ENCODE measurements at regions of chr21 and their contacts with region 1.

Region 1: GRCh38 chr21:14675774-14676530 is 129.8 kb upstream of the SAMSN1 start:
- DNase-seq: no peak
- ATAC-seq: peak; percentile 79
- H3K4me3 Mint-ChIP-seq: peak overlapping the region; percentile 46
- H3K27ac Mint-ChIP-seq: peak overlapping the region; percentile 90
- H3K4me1 Mint-ChIP-seq: peaks cover 60% of the 10 kb centered on the region
- H3K27me3 Mint-ChIP-seq: no peaks in the 10 kb centered on the region
- CTCF ChIP-seq: no peak

Region 2: DNA sequence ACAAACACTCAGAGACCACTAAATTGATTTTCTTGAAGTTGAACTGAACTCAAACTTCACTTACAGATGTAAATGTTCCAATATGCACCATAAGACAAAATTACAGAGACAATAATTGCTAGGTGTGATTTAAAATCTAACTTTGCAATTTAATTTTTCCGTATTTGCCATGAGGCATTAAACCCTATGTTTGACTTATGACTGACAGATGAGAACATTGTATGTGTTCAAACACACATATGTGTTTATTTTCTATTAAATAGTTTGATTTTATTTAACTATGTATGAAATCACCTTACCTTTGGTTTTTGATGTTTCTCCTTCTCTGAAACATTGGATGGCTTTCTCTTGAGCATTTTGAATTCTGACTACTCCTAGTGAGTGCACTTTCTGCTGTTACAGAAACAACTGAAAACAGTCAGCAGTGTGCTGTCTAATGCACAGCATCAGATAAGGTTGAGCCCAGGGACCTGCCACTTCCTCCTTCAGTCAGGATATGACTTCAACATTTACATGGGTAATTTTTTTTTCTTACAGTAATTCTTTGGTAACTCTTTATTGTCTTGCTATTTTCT is 130.0 kb before region 1 on chr21 and contains the start of gene SAMSN1:
- CTCF ChIA-PET with region 1: no interaction called
- POLR2A ChIA-PET with region 1: interaction called, 3 read pairs
- intact Hi-C with region 1: loop called (anchors 5 kb)
- DNase-seq: no peak
- ATAC-seq: peak; percentile 93
- H3K4me3 Mint-ChIP-seq: peak within 1 kb of the TSS; percentile 88
- H3K27ac Mint-ChIP-seq: peak within 1 kb of the TSS; percentile 87
- H3K4me1 Mint-ChIP-seq: peaks cover 64% of the 10 kb centered on the region
- H3K27me3 Mint-ChIP-seq: no peaks in the 10 kb centered on the region
- CTCF ChIP-seq: no peak
- total RNA-seq, gene SAMSN1: 48.7 and 49.7 TPM in 2 replicates

Region 3: GRCh38 chr21:14557413-14557812 is 118.5 kb before region 1 on chr21:
- CTCF ChIA-PET with region 1: no interaction called
- POLR2A ChIA-PET with region 1: no interaction called
- intact Hi-C with region 1: no loop called
- DNase-seq: no peak
- ATAC-seq: peak; percentile 41
- H3K4me3 Mint-ChIP-seq: peak overlapping the region; percentile 44
- H3K27ac Mint-ChIP-seq: peak overlapping the region; percentile 89
- H3K4me1 Mint-ChIP-seq: peaks cover 64% of the 10 kb centered on the region
- H3K27me3 Mint-ChIP-seq: no peaks in the 10 kb centered on the region
- CTCF ChIP-seq: no peak

Region 4: DNA sequence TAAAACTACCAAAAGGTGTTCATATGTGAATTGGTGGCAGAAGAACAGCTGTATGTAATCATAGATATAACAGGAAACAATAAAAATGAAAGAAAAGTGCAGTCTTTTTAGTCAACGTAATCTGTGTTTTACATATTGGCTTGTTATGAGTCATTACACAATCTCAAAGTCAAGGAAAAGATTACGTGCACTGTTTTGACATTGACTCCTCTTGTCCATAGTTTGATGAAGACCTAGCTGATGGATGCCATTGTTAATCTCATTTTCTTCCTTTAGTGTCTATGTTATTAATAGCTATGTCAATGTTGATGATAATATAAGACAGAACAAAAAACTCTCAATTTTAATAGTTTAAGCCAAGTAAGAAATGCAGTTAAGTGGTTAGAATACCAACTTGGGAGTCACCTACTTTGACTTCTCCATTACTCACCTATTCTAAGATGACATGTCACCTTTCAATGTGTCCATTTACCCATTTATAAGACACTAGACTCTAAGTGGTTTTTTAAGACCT is 45.3 kb before region 1 on chr21:
- CTCF ChIA-PET with region 1: no interaction called
- POLR2A ChIA-PET with region 1: interaction called, 3 read pairs
- intact Hi-C with region 1: loop called (anchors 5 kb)
- DNase-seq: no peak
- ATAC-seq: peak; percentile 75
- H3K4me3 Mint-ChIP-seq: no peak overlapping the region
- H3K27ac Mint-ChIP-seq: peak overlapping the region; percentile 24
- H3K4me1 Mint-ChIP-seq: peaks cover 16% of the 10 kb centered on the region
- H3K27me3 Mint-ChIP-seq: no peaks in the 10 kb centered on the region
- CTCF ChIP-seq: no peak

Region 5: GRCh38 chr21:14712121-14712723 is 36.3 kb after region 1 on chr21:
- CTCF ChIA-PET with region 1: no interaction called
- POLR2A ChIA-PET with region 1: no interaction called
- intact Hi-C with region 1: no loop called
- DNase-seq: no peak
- ATAC-seq: no peak
- H3K4me3 Mint-ChIP-seq: no peak overlapping the region
- H3K27ac Mint-ChIP-seq: no peak overlapping the region
- H3K4me1 Mint-ChIP-seq: no peaks in the 10 kb centered on the region
- H3K27me3 Mint-ChIP-seq: no peaks in the 10 kb centered on the region
- CTCF ChIP-seq: no peak

Region 6: DNA sequence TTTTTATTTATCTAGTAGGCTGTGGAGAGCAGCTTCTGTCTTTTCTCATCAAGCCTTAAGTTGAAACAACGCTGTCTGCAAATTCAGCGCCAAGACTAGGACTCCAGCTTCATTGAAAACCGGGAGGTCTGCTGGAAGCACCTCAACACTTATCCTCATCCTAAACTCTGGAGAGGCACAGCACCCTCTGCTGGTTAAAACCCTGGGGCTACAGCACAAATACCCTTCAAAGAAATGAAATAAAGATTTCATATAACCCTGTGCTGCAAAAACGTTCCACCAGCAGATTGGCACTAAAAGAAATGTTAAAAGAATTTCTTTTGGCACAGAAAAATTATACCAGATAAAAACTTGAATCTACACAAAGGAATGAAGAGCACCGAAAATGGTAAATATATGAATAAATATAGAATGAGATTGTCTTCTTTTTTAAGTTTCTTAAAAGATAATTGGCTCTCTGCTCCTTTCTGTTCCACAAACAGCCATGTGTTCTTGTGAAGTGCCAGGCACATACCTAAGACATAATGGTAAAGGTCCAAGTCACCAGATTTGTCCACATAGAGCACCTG is 97.9 kb after region 1 on chr21:
- CTCF ChIA-PET with region 1: no interaction called
- POLR2A ChIA-PET with region 1: no interaction called
- intact Hi-C with region 1: no loop called
- DNase-seq: peak; percentile 28
- ATAC-seq: peak; percentile 49
- H3K4me3 Mint-ChIP-seq: no peak overlapping the region
- H3K27ac Mint-ChIP-seq: no peak overlapping the region
- H3K4me1 Mint-ChIP-seq: peaks cover 9% of the 10 kb centered on the region
- H3K27me3 Mint-ChIP-seq: no peaks in the 10 kb centered on the region
- CTCF ChIP-seq: peak; percentile 26

Region 7: DNA sequence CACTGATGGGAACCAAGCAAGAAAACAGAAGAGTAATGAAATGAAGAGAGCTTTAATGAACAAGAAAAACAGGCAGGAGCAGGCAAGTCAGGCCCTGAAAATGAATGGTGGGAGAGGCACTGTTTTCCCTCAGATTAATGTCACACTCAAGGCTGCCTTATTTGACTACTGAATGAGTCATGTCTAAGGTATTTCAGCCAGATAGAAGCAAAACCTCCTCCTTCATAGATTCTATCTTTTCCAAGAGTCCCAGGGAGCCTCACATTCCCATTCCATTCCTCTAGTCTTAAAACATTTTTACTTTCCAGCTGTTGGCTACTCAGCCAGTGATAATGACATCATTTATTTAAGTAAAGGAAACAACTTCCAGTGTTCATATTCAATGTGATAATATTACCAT is 617.3 kb after region 1 on chr21:
- CTCF ChIA-PET with region 1: no interaction called
- POLR2A ChIA-PET with region 1: no interaction called
- intact Hi-C with region 1: no loop called
- DNase-seq: no peak
- ATAC-seq: no peak
- H3K4me3 Mint-ChIP-seq: no peak overlapping the region
- H3K27ac Mint-ChIP-seq: no peak overlapping the region
- H3K4me1 Mint-ChIP-seq: peaks cover 10% of the 10 kb centered on the region
- H3K27me3 Mint-ChIP-seq: no peaks in the 10 kb centered on the region
- CTCF ChIP-seq: no peak